Naive thymus-derived CD4-positive, alpha-beta T cell (primary cell): ENCODE measurements at regions of chr16 and their contacts with region 1.

Region 1: DNA sequence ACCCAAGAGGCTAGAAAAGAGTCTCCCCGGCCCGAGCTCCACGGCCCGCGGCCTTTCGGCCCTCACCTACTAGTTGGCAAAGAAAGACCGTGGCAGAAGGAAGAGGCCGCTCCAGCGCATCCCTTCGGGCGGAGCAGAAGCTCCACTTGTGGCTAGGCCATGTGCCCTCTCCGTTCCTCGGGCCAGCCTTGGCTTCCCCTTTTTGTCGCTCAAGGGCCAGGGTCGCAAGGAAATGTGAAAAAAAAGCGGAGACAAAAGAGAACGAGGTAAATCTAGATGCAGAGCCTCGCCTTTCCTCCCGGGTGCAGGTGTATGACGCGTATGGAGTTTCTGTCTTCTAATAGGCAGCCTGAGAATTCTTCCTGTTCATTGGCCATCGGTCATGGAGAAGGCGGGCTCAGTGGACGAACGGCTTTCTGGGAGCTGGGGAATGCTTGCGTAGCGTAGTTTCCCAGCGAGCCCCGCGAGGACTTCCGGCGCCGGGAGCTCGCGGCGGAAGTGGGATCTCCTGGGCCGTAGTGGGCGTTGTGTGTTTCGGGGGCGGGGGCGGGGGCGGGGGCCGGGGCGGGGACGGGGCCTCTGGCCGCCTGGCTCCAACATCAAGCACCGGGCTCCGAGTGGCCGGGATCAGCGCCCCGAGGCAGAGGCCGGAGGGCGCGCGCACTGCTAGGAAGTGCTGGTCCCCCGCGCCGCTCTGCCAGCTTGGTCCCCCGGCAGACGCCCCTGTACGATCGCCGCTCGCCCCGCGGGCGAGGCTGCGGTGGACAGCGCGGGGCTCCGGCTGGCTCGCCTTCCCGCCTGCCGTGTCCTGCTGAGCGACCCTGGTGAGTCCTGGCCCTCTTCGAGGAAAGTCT is at the start of gene ZNF213:
- DNase-seq: peak; percentile 70 to 97 (median 95)
- ATAC-seq: peak; percentile 98
- H3K4me3 ChIP-seq: peak within 1 kb of the TSS; percentile 94
- H3K4me3 Mint-ChIP-seq: peak within 1 kb of the TSS; percentile 93 to 99 (median 96)
- H3K27ac ChIP-seq: peak within 1 kb of the TSS; percentile 93
- H3K27ac Mint-ChIP-seq: peak within 1 kb of the TSS; percentile 94 to 98 (median 97)
- H3K4me1 ChIP-seq: peaks cover 10 to 11% of the 10 kb centered on the region in 2 donors
- H3K4me1 Mint-ChIP-seq: peaks cover 12 to 45% (median 34%) of the 10 kb centered on the region in 7 donors
- H3K27me3 ChIP-seq: no peaks in the 10 kb centered on the region
- H3K27me3 Mint-ChIP-seq: no peaks in the 10 kb centered on the region
- total RNA-seq, gene ZNF213: 3.8 to 14.0 (median 11.8) TPM

Region 2: DNA sequence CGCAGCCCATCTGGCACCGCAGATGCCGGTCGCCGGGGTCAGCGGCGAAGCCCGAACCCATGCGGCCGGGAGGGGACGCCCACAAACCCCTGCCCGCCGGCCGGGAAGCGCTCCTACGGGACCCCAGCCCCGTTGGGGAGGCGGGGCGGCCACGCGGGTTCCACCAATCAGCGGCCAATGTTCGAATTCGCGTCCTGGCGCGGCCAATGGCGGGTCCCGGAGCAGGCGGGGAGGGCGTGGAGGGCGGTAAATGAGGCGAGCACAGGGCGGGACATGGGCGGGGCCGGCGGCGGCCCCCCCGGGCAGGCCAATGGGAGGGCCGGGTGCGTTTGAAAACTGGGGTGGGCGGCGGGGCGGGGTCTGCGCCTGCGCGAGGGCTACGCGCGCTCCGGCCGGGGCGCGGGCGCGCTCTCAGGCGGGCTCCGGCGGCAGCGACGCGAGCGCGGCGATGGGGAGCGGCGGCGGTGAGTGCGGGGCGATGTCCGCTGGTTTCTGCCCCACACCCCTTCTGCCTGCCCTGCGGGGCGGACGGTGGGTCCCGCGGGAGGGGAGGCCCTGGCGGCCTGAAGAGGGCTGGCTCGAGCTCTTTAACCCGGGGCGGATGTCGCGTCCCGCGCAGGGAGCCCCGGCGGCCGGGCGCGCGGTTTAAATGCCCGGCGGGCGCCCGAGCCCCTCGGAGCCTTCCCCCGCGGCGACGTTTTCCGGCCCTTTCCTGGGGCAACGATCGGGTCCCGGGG is 705.6 kb before region 1 on chr16 and contains the start of gene CCNF:
- CTCF ChIA-PET with region 1: no interaction called
- POLR2A ChIA-PET with region 1: no interaction called
- intact Hi-C with region 1: loop called in 1 of 2 experiments (anchors 5 kb)
- DNase-seq: peak; percentile 87 to 98 (median 92)
- ATAC-seq: peak; percentile 99
- H3K4me3 ChIP-seq: peak within 1 kb of the TSS; percentile 83
- H3K4me3 Mint-ChIP-seq: peak within 1 kb of the TSS; percentile 81 to 97 (median 88)
- H3K27ac ChIP-seq: peak within 1 kb of the TSS; percentile 68
- H3K27ac Mint-ChIP-seq: peak within 1 kb of the TSS; percentile 11 to 88 (median 71)
- H3K4me1 ChIP-seq: peaks cover 5 to 10% of the 10 kb centered on the region in 2 donors
- H3K4me1 Mint-ChIP-seq: peaks cover 12 to 38% (median 19%) of the 10 kb centered on the region in 7 donors
- H3K27me3 ChIP-seq: no peaks in the 10 kb centered on the region
- H3K27me3 Mint-ChIP-seq: no peaks in the 10 kb centered on the region
- total RNA-seq, gene CCNF: 2.6 to 50.1 (median 3.4) TPM

Region 3: GRCh38 chr16:2854700-2855309 is 280.0 kb before region 1 on chr16:
- CTCF ChIA-PET with region 1: no interaction called
- POLR2A ChIA-PET with region 1: no interaction called
- intact Hi-C with region 1: no loop called
- DNase-seq: no peak
- ATAC-seq: no peak
- H3K4me3 ChIP-seq: no peak overlapping the region
- H3K4me3 Mint-ChIP-seq: no peak overlapping the region
- H3K27ac ChIP-seq: no peak overlapping the region
- H3K27ac Mint-ChIP-seq: no peak overlapping the region
- H3K4me1 ChIP-seq: peaks cover 3 to 12% of the 10 kb centered on the region in 2 donors
- H3K4me1 Mint-ChIP-seq: peaks cover 3 to 13% (median 5%) of the 10 kb centered on the region in 7 donors
- H3K27me3 ChIP-seq: peaks cover 0 to 6% of the 10 kb centered on the region in 2 donors
- H3K27me3 Mint-ChIP-seq: peaks cover 0 to 9% (median 5%) of the 10 kb centered on the region in 5 donors

Region 4: GRCh38 chr16:3065069-3065741 is 69.6 kb before region 1 on chr16 and contains the start of gene IL32:
- CTCF ChIA-PET with region 1: interaction called, 244 read pairs
- POLR2A ChIA-PET with region 1: interaction called, 182 read pairs
- intact Hi-C with region 1: no loop called
- DNase-seq: peak in 8 of 9 donors; percentile 43 to 69 (median 64)
- ATAC-seq: peak; percentile 78
- H3K4me3 ChIP-seq: peak within 1 kb of the TSS; percentile 78
- H3K4me3 Mint-ChIP-seq: peak within 1 kb of the TSS; percentile 98 to 100 (median 99)
- H3K27ac ChIP-seq: peak within 1 kb of the TSS; percentile 88
- H3K27ac Mint-ChIP-seq: peak within 1 kb of the TSS; percentile 94 to 100 (median 98)
- H3K4me1 ChIP-seq: peaks cover 25 to 27% of the 10 kb centered on the region in 2 donors
- H3K4me1 Mint-ChIP-seq: peaks cover 46 to 65% (median 60%) of the 10 kb centered on the region in 7 donors
- H3K27me3 ChIP-seq: no peaks in the 10 kb centered on the region
- H3K27me3 Mint-ChIP-seq: no peaks in the 10 kb centered on the region
- total RNA-seq, gene IL32: 351 to 3,697 (median 587) TPM

Region 5: GRCh38 chr16:3123986-3124886 is 10.6 kb before region 1 on chr16:
- CTCF ChIA-PET with region 1: interaction called, 6 read pairs
- POLR2A ChIA-PET with region 1: interaction called, 15 read pairs
- intact Hi-C with region 1: loop called (anchors 1 kb)
- DNase-seq: peak; percentile 92 to 97 (median 96)
- ATAC-seq: peak; percentile 95
- H3K4me3 ChIP-seq: peak overlapping the region; percentile 90
- H3K4me3 Mint-ChIP-seq: peak overlapping the region; percentile 92 to 99 (median 96)
- H3K27ac ChIP-seq: peak overlapping the region; percentile 75
- H3K27ac Mint-ChIP-seq: peak overlapping the region; percentile 85 to 99 (median 97)
- H3K4me1 ChIP-seq: peaks cover 20 to 29% of the 10 kb centered on the region in 2 donors
- H3K4me1 Mint-ChIP-seq: peaks cover 16 to 51% (median 43%) of the 10 kb centered on the region in 7 donors
- H3K27me3 ChIP-seq: no peaks in the 10 kb centered on the region
- H3K27me3 Mint-ChIP-seq: no peaks in the 10 kb centered on the region

Region 6: GRCh38 chr16:3165111-3165822 is 30.5 kb after region 1 on chr16:
- CTCF ChIA-PET with region 1: interaction called, 14 read pairs
- POLR2A ChIA-PET with region 1: interaction called, 95 read pairs
- intact Hi-C with region 1: loop called (anchors 1 kb)
- DNase-seq: no peak
- ATAC-seq: no peak
- H3K4me3 ChIP-seq: no peak overlapping the region
- H3K4me3 Mint-ChIP-seq: peak overlapping the region; percentile 39 to 80 (median 58)
- H3K27ac ChIP-seq: peak overlapping the region; percentile 55
- H3K27ac Mint-ChIP-seq: peak overlapping the region; percentile 36 to 93 (median 71)
- H3K4me1 ChIP-seq: peaks cover under 1 to 4% of the 10 kb centered on the region in 2 donors
- H3K4me1 Mint-ChIP-seq: peaks cover 9 to 24% (median 10%) of the 10 kb centered on the region in 7 donors
- H3K27me3 ChIP-seq: no peaks in the 10 kb centered on the region
- H3K27me3 Mint-ChIP-seq: peaks cover 0 to 27% (median 0%) of the 10 kb centered on the region in 5 donors

Region 7: DNA sequence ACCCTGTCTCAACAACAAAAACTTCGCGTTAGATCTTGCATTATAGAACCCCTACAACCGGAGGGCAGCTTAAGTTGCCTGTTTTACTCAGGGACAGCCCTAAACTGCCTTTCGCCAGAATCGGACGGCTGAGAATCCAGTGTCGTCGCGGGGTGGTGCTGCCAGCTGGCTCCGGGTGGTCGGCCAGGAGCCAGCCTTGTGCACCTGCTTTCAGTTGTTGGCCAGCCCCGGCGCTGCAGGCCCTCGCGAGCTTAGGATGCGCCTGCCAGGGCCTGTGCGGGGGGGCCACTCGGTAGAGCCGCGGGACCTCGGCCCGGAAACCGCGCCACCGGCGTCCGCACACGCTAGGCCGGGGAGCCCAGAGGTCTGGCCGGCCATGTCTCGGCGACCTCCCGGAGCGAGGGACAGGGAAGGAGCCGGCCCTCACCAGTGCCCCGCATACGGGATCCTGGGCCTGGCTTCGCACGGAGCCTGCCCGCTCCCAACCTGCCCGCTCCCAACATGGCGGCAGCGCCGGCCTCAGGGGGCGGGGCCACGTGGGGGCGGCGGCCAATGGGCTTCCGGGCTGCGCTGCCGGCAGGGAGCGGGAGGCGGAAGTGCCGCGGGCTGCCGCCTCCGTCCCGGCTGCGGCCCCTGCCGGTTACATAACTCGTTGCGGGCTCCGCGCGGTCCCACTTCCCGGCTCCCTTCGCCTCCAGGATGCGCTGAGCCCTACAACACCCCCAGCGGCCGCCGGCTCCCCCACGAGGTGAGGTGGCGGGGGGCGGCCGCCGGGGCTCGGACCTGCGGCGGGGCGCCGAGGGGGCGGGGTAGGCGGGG is 322.9 kb after region 1 on chr16:
- CTCF ChIA-PET with region 1: interaction called, 7 read pairs
- POLR2A ChIA-PET with region 1: interaction called, 10 read pairs
- intact Hi-C with region 1: loop called in 1 of 2 experiments (anchors 1 kb)
- DNase-seq: peak; percentile 87 to 95 (median 93)
- ATAC-seq: peak; percentile 96
- H3K4me3 ChIP-seq: peak overlapping the region; percentile 84
- H3K4me3 Mint-ChIP-seq: peak overlapping the region; percentile 78 to 88 (median 86)
- H3K27ac ChIP-seq: peak overlapping the region; percentile 96
- H3K27ac Mint-ChIP-seq: peak overlapping the region; percentile 74 to 94 (median 88)
- H3K4me1 ChIP-seq: peaks cover 37 to 45% of the 10 kb centered on the region in 2 donors
- H3K4me1 Mint-ChIP-seq: peaks cover 33 to 57% (median 48%) of the 10 kb centered on the region in 7 donors
- H3K27me3 ChIP-seq: no peaks in the 10 kb centered on the region
- H3K27me3 Mint-ChIP-seq: no peaks in the 10 kb centered on the region